ENCODE measurements at regions of chr17 and their contacts with region 1.

Region 1: GRCh38 chr17:74736513-74737298 is at the start of gene RAB37:
- DNase-seq: peak; percentile 57
- ATAC-seq: peak; percentile 20
- H3K4me3 Mint-ChIP-seq: peak within 1 kb of the TSS; percentile 85
- H3K27ac Mint-ChIP-seq: peak within 1 kb of the TSS; percentile 90
- H3K4me1 Mint-ChIP-seq: peaks cover 51% of the 10 kb centered on the region
- H3K27me3 Mint-ChIP-seq: peaks cover 11% of the 10 kb centered on the region
- total RNA-seq, gene RAB37: 19.1 to 19.6 TPM

Region 2: GRCh38 chr17:74671031-74671771 is 65.5 kb before region 1 on chr17:
- CTCF ChIA-PET with region 1: interaction called, 35 read pairs
- POLR2A ChIA-PET with region 1: interaction called, 3 read pairs
- DNase-seq: peak; percentile 86
- ATAC-seq: peak; percentile 99
- H3K4me3 Mint-ChIP-seq: no peak overlapping the region
- H3K27ac Mint-ChIP-seq: no peak overlapping the region
- H3K4me1 Mint-ChIP-seq: no peaks in the 10 kb centered on the region
- H3K27me3 Mint-ChIP-seq: peaks cover 56% of the 10 kb centered on the region

Region 3: DNA sequence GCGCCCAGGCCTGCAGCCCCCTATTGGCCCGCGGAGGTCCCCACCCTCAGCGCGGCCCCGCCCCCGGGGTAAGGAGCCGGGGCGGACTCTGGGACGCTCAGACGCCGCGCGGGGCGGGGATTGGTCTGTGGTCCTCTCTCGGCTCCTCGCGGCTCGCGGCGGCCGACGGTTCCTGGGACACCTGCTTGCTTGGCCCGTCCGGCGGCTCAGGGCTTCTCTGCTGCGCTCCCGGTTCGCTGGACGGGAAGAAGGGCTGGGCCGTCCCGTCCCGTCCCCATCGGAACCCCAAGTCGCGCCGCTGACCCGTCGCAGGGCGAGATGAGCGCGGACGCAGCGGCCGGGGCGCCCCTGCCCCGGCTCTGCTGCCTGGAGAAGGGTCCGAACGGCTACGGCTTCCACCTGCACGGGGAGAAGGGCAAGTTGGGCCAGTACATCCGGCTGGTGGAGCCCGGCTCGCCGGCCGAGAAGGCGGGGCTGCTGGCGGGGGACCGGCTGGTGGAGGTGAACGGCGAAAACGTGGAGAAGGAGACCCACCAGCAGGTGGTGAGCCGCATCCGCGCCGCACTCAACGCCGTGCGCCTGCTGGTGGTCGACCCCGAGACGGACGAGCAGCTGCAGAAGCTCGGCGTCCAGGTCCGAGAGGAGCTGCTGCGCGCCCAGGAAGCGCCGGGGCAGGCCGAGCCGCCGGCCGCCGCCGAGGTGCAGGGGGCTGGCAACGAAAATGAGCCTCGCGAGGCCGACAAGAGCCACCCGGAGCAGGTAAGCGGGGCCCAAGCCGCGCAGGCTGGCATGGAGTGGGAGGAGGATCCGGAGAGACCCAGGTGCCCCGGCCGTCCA is 12.0 kb after region 1 on chr17 and contains the start of gene NHERF1:
- CTCF ChIA-PET with region 1: interaction called, 42 read pairs
- POLR2A ChIA-PET with region 1: interaction called, 62 read pairs
- DNase-seq: peak; percentile 95
- ATAC-seq: peak; percentile 90
- H3K4me3 Mint-ChIP-seq: peak within 1 kb of the TSS; percentile 99
- H3K27ac Mint-ChIP-seq: peak within 1 kb of the TSS; percentile 90
- H3K4me1 Mint-ChIP-seq: peaks cover 55% of the 10 kb centered on the region
- H3K27me3 Mint-ChIP-seq: no peaks in the 10 kb centered on the region
- total RNA-seq, gene NHERF1: 286 to 296 TPM

Region 4: GRCh38 chr17:74770498-74771318 is 34.0 kb after region 1 on chr17:
- CTCF ChIA-PET with region 1: interaction called, 33 read pairs
- POLR2A ChIA-PET with region 1: no interaction called
- DNase-seq: peak; percentile 77
- ATAC-seq: peak; percentile 78
- H3K4me3 Mint-ChIP-seq: no peak overlapping the region
- H3K27ac Mint-ChIP-seq: peak overlapping the region; percentile 61
- H3K4me1 Mint-ChIP-seq: peaks cover 46% of the 10 kb centered on the region
- H3K27me3 Mint-ChIP-seq: no peaks in the 10 kb centered on the region

Region 5: GRCh38 chr17:74785096-74785980 is 48.6 kb after region 1 on chr17:
- CTCF ChIA-PET with region 1: interaction called, 34 read pairs
- POLR2A ChIA-PET with region 1: interaction called, 7 read pairs
- DNase-seq: no peak
- ATAC-seq: peak; percentile 31
- H3K4me3 Mint-ChIP-seq: no peak overlapping the region
- H3K27ac Mint-ChIP-seq: peak overlapping the region; percentile 80
- H3K4me1 Mint-ChIP-seq: peaks cover 71% of the 10 kb centered on the region
- H3K27me3 Mint-ChIP-seq: no peaks in the 10 kb centered on the region

Region 6: DNA sequence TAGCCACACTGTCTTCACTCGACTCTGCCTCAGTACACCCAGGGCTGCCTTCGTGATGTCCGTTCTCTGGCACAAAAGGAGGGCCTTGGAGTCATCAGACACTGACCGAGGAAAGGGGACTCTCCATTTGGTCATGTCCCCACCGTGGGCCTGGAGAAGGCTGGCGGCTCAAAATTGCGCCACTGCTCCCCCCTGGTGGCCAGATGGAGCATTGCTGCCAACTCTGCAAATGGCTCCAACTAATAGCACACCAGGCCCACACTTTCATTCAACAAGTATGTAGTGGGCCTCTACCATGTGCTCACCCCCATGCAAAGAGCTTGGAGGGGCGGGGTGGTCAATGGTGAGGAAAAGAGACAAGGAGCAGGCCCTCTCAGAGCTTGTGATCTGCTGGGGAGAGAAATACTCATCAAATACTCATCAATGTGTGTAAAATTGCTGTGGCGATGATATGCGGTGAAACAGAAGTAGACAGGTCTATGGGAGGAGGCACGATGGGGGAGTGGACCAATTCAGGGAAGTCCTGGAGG is 128.2 kb after region 1 on chr17:
- CTCF ChIA-PET with region 1: interaction called, 18 read pairs
- POLR2A ChIA-PET with region 1: interaction called, 4 read pairs
- DNase-seq: peak; percentile 80
- ATAC-seq: peak; percentile 60
- H3K4me3 Mint-ChIP-seq: no peak overlapping the region
- H3K27ac Mint-ChIP-seq: no peak overlapping the region
- H3K4me1 Mint-ChIP-seq: peaks cover 23% of the 10 kb centered on the region
- H3K27me3 Mint-ChIP-seq: peaks cover 18% of the 10 kb centered on the region

Measured in activated CD8-positive, alpha-beta T cell treated with anti-CD3 and anti-CD28 coated beads, Interleukin-2, amount 10 ng/mL, durations not matched to agents 7 days and 5 days (primary cell).